WTC11 (cell line): ENCODE measurements at regions of chr11 and their contacts with region 1.

Region 1: GRCh38 chr11:6812390-6813005 is 13.0 kb upstream of the OR6A2 start:
- DNase-seq: peak; percentile 31
- ATAC-seq: peak; percentile 98
- H3K4me3 Mint-ChIP-seq: no peak overlapping the region
- H3K27ac Mint-ChIP-seq: no peak overlapping the region
- H3K4me1 Mint-ChIP-seq: peaks cover 3% of the 10 kb centered on the region
- H3K27me3 Mint-ChIP-seq: peaks cover 4% of the 10 kb centered on the region; the same call in 1 of the 2 replicates
- CTCF ChIP-seq: peak; percentile 89

Region 2: GRCh38 chr11:6538456-6538855 is 274.0 kb before region 1 on chr11:
- CTCF ChIA-PET with region 1: no interaction called
- POLR2A ChIA-PET with region 1: no interaction called
- DNase-seq: peak; percentile 18
- ATAC-seq: peak; percentile 81
- H3K4me3 Mint-ChIP-seq: no peak overlapping the region
- H3K27ac Mint-ChIP-seq: peak overlapping the region; percentile 39; the same call in 1 of the 2 replicates
- H3K4me1 Mint-ChIP-seq: peaks cover 10% of the 10 kb centered on the region
- H3K27me3 Mint-ChIP-seq: no peaks in the 10 kb centered on the region
- CTCF ChIP-seq: no peak

Region 3: GRCh38 chr11:6693342-6694228 is 118.9 kb before region 1 on chr11:
- CTCF ChIA-PET with region 1: no interaction called
- POLR2A ChIA-PET with region 1: no interaction called
- DNase-seq: no peak
- ATAC-seq: no peak
- H3K4me3 Mint-ChIP-seq: no peak overlapping the region
- H3K27ac Mint-ChIP-seq: no peak overlapping the region
- H3K4me1 Mint-ChIP-seq: peaks cover 8% of the 10 kb centered on the region
- H3K27me3 Mint-ChIP-seq: no peaks in the 10 kb centered on the region; the same call in 1 of the 2 replicates
- CTCF ChIP-seq: no peak

Region 4: DNA sequence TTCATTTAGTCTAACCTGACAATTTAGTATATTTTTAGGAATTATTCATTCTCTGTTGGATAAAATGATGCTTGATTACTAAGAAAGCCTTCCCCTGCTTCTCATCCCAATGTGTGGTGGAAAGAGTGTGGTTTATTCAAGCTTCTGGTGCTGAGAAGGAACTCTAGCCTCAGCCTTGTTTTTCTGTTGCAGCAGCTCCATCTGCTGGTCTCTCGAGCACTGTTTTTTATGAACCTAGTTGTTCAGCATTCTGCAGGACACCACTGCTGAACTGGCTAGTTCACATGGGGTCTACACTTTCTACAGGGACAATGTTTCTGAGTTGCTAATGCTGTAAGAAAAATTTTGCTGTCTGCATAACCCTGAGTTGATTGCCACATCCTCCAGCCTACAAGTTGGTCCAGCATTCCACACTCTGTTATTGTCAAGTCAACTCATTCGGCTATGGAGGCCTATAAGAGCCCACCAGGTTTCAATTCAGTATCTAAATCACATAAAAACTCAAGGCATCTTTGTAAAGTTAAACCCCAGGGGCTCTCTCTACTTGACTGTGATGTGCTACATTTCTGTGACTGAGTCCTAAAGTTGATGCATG is 55.0 kb before region 1 on chr11:
- CTCF ChIA-PET with region 1: interaction called, 42 read pairs
- POLR2A ChIA-PET with region 1: no interaction called
- DNase-seq: peak; percentile 52
- ATAC-seq: peak; percentile 94
- H3K4me3 Mint-ChIP-seq: no peak overlapping the region
- H3K27ac Mint-ChIP-seq: no peak overlapping the region
- H3K4me1 Mint-ChIP-seq: no peaks in the 10 kb centered on the region
- H3K27me3 Mint-ChIP-seq: no peaks in the 10 kb centered on the region; the same call in 1 of the 2 replicates
- CTCF ChIP-seq: no peak

Region 5: GRCh38 chr11:6799402-6799801 is 13.1 kb before region 1 on chr11 and contains the start of gene OR6A2:
- CTCF ChIA-PET with region 1: interaction called, 14 read pairs
- POLR2A ChIA-PET with region 1: no interaction called
- DNase-seq: no peak
- ATAC-seq: no peak
- H3K4me3 Mint-ChIP-seq: no peak within 1 kb of the TSS
- H3K27ac Mint-ChIP-seq: no peak within 1 kb of the TSS
- H3K4me1 Mint-ChIP-seq: peaks cover 15% of the 10 kb centered on the region
- H3K27me3 Mint-ChIP-seq: peaks cover 4% of the 10 kb centered on the region; the same call in 1 of the 2 replicates
- CTCF ChIP-seq: no peak
- total RNA-seq, gene OR6A2: 0.07 to 0.27 TPM (median 0.07 TPM) in 3 replicates

Region 6: GRCh38 chr11:6833356-6833755 is 20.9 kb after region 1 on chr11:
- CTCF ChIA-PET with region 1: interaction called, 10 read pairs
- POLR2A ChIA-PET with region 1: no interaction called
- DNase-seq: no peak
- ATAC-seq: no peak
- H3K4me3 Mint-ChIP-seq: no peak overlapping the region
- H3K27ac Mint-ChIP-seq: no peak overlapping the region
- H3K4me1 Mint-ChIP-seq: no peaks in the 10 kb centered on the region
- H3K27me3 Mint-ChIP-seq: peaks cover 2% of the 10 kb centered on the region; the same call in 1 of the 2 replicates
- CTCF ChIP-seq: no peak

Region 7: DNA sequence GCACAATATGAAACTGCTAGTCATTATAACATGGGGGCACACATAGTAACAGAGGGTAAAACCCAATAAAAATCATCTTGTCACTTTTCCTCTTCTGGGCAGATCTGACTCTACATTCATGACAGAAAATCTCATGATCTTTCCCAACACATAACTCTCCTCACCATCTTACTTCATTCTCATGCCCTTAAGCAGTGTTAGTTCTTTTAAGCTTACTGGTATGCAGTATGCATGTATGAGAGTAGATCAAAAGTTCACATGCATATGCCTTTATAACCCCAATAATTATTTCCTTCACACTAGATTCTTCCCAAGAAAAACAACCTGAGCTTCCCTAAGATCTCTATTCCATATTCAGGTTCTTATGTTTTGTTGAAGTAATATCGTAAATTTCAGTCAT is 58.8 kb after region 1 on chr11:
- CTCF ChIA-PET with region 1: no interaction called
- POLR2A ChIA-PET with region 1: no interaction called
- DNase-seq: no peak
- ATAC-seq: no peak
- H3K4me3 Mint-ChIP-seq: no peak overlapping the region
- H3K27ac Mint-ChIP-seq: no peak overlapping the region
- H3K4me1 Mint-ChIP-seq: no peaks in the 10 kb centered on the region
- H3K27me3 Mint-ChIP-seq: no peaks in the 10 kb centered on the region; the same call in 1 of the 2 replicates
- CTCF ChIP-seq: no peak

Region 8: DNA sequence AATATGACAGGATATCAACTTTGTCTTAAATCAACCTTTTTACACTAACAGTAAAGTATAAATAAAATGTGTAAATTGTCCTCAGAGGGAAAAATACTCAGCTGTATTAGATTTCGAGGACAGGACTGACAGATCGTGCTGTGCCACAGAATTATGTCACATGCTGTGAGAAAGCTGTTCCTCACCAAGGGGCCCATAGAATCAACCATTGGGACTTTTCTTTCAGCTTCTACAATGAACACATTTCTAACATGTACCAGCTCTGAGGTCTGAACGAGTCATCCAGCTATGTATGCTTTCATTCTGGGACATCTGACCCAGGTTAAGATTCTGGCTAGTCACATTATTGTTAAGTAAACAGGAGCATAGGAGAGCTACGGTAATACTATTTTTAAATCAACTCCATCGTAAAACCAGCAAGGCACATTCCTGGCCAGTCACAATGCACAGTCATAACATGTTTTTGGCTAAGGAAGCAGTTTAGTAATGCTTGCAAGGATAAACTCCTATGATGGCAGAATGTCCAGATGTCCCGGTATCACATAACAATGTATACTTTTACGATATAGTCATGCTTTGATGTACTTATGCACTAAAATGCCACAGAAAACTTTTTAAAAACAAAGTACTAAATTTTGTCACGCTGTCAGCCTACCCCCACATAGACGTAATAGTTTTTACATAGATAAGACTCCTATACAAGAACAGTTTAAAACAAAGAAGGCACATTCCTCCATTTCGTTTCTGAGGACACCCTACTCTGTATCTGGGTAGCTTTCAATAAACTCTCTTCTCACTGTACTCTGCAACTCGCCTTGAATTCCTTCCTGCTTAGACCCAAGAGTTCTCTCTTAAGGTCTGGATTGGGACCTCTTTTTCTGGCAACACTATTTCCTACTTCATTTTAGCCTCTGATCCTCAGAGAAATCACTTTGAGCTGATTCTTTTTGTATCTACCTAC is 180.2 kb after region 1 on chr11:
- CTCF ChIA-PET with region 1: interaction called, 10 read pairs
- POLR2A ChIA-PET with region 1: no interaction called
- DNase-seq: no peak
- ATAC-seq: no peak
- H3K4me3 Mint-ChIP-seq: no peak overlapping the region
- H3K27ac Mint-ChIP-seq: no peak overlapping the region
- H3K4me1 Mint-ChIP-seq: no peaks in the 10 kb centered on the region
- H3K27me3 Mint-ChIP-seq: no peaks in the 10 kb centered on the region
- CTCF ChIP-seq: no peak

Region 9: GRCh38 chr11:7056828-7057513 is 244.5 kb after region 1 on chr11:
- CTCF ChIA-PET with region 1: interaction called, 11 read pairs
- POLR2A ChIA-PET with region 1: no interaction called
- DNase-seq: no peak
- ATAC-seq: no peak
- H3K4me3 Mint-ChIP-seq: no peak overlapping the region
- H3K27ac Mint-ChIP-seq: no peak overlapping the region
- H3K4me1 Mint-ChIP-seq: peaks cover 2% of the 10 kb centered on the region; the same call in 1 of the 2 replicates
- H3K27me3 Mint-ChIP-seq: no peaks in the 10 kb centered on the region
- CTCF ChIP-seq: no peak